Activated naive CD4-positive, alpha-beta T cell treated with anti-CD3 and anti-CD28 coated beads, Interleukin-2, amount 10 ng/mL, durations not matched to agents 7 days and 5 days (primary cell): ENCODE measurements at regions of chr11 and their contacts with region 1.

Region 1: DNA sequence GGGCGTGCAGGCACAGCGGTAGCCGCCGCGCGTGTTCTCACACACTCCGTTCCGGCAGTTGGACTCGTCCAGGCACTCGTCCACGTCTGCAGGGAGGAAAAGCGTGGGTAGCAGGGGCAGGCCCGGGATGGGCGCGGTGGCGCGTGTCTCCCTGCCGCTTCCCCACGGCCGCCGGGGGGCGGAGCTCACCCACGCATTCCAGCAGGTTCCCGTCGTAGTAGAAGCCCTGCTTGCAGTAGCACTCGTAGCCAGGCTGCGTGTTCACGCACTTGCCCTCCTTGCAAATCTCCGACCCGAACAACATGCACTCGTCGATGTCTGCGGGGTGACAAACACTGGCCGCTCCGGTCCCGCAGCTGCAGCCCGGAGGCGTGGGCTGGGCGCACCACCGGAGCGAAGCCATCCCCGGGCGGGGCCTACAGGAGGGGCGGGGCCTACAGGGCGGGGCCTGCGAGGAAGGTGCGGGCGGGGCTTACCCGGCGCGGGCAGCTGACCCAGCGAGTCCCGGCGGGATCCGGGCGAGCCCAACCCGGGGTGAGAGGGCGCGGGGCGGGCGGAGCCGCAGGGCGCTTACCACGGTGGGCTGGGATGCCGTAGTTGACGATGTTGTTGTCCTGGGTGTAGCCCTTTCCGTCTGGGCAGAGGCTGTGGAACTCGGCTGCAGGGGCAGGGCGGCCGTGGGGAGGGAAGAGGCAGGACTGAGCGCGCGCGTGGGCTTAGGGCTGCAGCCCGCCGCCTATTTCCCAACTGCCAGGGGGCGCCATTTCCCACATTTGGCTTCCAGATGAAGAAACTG is 15.6 kb downstream of the SCYL1 start:
- DNase-seq: peak; percentile 92
- H3K4me3 Mint-ChIP-seq: peak overlapping the region; percentile 81
- H3K27ac Mint-ChIP-seq: peak overlapping the region; percentile 89
- H3K4me1 Mint-ChIP-seq: peaks cover 20% of the 10 kb centered on the region
- H3K27me3 Mint-ChIP-seq: no peaks in the 10 kb centered on the region

Region 2: DNA sequence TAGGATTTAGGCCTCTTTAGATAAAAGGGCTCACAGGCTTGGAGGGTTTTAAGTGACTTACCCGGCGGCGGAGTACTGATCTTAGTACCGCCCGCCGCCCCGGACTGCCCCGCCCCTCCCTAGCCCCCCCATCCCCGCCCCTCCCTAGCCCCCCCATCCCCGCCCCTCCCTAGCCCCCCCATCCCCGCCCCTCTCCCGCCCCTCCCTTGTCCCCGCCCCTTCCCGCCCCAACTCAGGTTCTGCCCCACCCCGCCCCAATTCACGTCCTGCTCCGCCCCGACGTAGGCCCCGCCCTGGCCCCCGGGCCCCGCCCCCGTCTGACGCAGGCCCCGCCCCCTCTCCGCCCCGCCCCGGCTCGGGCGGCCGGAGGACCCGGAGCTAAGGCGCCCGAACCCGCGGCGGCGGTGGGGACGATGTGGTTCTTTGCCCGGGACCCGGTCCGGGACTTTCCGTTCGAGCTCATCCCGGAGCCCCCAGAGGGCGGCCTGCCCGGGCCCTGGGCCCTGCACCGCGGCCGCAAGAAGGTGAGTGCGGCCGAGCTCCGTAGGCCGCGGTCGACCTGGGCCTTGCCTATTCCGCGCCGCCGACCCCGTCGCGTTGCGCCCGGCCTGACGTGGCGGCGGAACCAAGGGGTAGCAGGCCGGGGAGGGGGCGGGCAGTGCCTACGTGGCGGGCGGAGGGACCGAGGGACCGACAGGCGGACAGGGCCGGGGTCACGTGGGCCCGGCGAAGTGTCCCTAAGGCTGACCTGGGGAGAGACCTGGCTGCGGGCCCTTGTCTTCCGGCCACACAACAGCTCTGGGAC is 15.6 kb before region 1 on chr11 and contains the start of gene SCYL1:
- CTCF ChIA-PET with region 1: interaction called, 15 read pairs
- DNase-seq: peak; percentile 81
- H3K4me3 Mint-ChIP-seq: peak within 1 kb of the TSS; percentile 89
- H3K27ac Mint-ChIP-seq: peak within 1 kb of the TSS; percentile 93
- H3K4me1 Mint-ChIP-seq: peaks cover 64% of the 10 kb centered on the region
- H3K27me3 Mint-ChIP-seq: no peaks in the 10 kb centered on the region

Region 3: GRCh38 chr11:65551572-65552398 is 11.3 kb after region 1 on chr11:
- CTCF ChIA-PET with region 1: interaction called, 35 read pairs
- DNase-seq: peak; percentile 81
- H3K4me3 Mint-ChIP-seq: peak overlapping the region; percentile 8
- H3K27ac Mint-ChIP-seq: peak overlapping the region; percentile 86
- H3K4me1 Mint-ChIP-seq: peaks cover 85% of the 10 kb centered on the region
- H3K27me3 Mint-ChIP-seq: peaks cover 4% of the 10 kb centered on the region

Region 4: GRCh38 chr11:65569973-65570918 is 29.8 kb after region 1 on chr11 and contains the start of gene ZNRD2:
- CTCF ChIA-PET with region 1: interaction called, 95 read pairs
- DNase-seq: peak; percentile 99
- H3K4me3 Mint-ChIP-seq: peak within 1 kb of the TSS; percentile 93
- H3K27ac Mint-ChIP-seq: peak within 1 kb of the TSS; percentile 98
- H3K4me1 Mint-ChIP-seq: peaks cover 72% of the 10 kb centered on the region
- H3K27me3 Mint-ChIP-seq: peaks cover 8% of the 10 kb centered on the region

Region 5: GRCh38 chr11:65588199-65589054 is 47.9 kb after region 1 on chr11:
- CTCF ChIA-PET with region 1: interaction called, 48 read pairs
- DNase-seq: peak; percentile 86
- H3K4me3 Mint-ChIP-seq: no peak overlapping the region
- H3K27ac Mint-ChIP-seq: peak overlapping the region; percentile 79
- H3K4me1 Mint-ChIP-seq: peaks cover 32% of the 10 kb centered on the region
- H3K27me3 Mint-ChIP-seq: no peaks in the 10 kb centered on the region

Region 6: DNA sequence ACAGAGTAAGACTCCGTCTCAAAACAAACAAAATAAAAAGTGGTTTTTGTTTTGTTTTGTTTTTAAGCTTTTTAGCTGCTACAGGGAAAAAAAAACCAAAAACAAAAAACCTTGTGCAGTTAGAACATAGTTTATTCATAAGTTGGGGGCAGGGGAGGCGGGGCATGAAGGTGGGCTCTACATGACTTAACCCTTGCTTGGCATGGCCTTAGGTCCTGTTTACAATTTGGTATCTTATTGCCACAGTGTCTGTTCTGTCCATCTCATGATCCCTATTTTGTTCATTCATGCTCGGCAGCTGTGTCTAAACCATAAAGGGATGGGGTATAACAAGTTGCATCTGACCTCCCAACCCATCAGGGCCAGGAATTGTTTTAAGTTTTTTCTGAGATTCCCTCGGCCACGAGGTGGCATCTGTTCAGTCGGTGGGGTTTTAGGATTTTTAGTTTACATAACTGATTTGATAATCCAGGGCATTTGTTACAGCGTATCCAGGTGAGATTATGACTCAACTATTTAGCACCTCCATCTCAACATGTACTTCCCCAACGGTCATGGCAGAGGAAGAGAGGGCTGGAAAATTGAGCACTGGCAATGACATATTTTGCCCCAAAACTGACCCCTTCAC is 233.4 kb after region 1 on chr11:
- CTCF ChIA-PET with region 1: no interaction called
- DNase-seq: no peak
- H3K4me3 Mint-ChIP-seq: no peak overlapping the region
- H3K27ac Mint-ChIP-seq: no peak overlapping the region
- H3K4me1 Mint-ChIP-seq: peaks cover 3% of the 10 kb centered on the region
- H3K27me3 Mint-ChIP-seq: no peaks in the 10 kb centered on the region